Psoas muscle (tissue), 8 donors: ENCODE measurements at regions of chr1 and their contacts with region 1.

Region 1: GRCh38 chr1:2044510-2045319 is 5.5 kb upstream of the PRKCZ start:
- DNase-seq: peak; percentile 79 to 81
- ATAC-seq: peak; percentile 81 to 88 (median 82)
- H3K4me3 ChIP-seq: peak overlapping the region; percentile 45
- H3K27ac ChIP-seq: no peak overlapping the region
- H3K4me1 ChIP-seq: no peaks in the 10 kb centered on the region
- H3K27me3 ChIP-seq: peaks cover 0 to 53% (median 15%) of the 10 kb centered on the region in 3 donors
- CTCF ChIP-seq: peak; percentile 80

Region 2: GRCh38 chr1:1943834-1944570 is 100.7 kb before region 1 on chr1:
- intact Hi-C with region 1: loop called (anchors 1 to 5 kb)
- DNase-seq: peak; percentile 62 to 76
- ATAC-seq: peak; percentile 72 to 92 (median 86)
- H3K4me3 ChIP-seq: no peak overlapping the region
- H3K27ac ChIP-seq: no peak overlapping the region
- H3K4me1 ChIP-seq: no peaks in the 10 kb centered on the region
- H3K27me3 ChIP-seq: peaks cover 0 to 50% (median 0%) of the 10 kb centered on the region in 3 donors
- CTCF ChIP-seq: peak; percentile 80

Region 3: DNA sequence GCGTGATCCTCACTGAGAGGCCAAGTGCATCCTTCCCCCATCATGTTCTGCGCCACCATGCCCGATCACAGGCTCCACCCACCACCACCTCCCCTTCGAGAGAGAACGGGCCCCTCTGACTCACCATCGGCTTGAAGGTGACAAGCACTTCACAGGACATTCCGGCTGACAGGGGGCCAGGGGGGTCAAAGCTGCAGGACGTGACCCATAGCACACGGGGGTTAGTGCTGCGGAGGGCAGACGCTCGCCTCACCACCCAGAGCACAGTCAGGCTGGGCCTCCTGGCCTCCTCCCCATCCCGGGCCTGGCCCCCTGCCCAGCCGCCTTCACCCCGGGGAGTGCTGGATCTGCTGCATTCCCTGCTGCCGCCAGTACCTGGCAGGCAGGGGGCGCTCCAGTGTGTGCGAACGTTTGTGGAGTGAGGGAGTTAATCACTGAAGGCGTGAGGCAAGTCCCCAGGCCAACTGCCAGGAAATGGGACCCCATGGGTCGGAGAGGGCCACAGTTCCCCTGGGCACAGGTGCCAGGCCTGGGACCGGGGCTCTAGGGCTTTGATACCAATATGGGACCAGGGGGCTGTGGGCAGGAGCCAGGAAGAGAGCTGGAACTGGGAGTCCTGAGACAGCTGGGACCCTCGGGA is 84.8 kb before region 1 on chr1:
- intact Hi-C with region 1: loop called (anchors 2 to 5 kb)
- DNase-seq: peak; percentile 79 to 80
- ATAC-seq: peak; percentile 40 to 69 (median 62)
- H3K4me3 ChIP-seq: no peak overlapping the region
- H3K27ac ChIP-seq: no peak overlapping the region
- H3K4me1 ChIP-seq: no peaks in the 10 kb centered on the region
- H3K27me3 ChIP-seq: peaks cover 0 to 95% (median 15%) of the 10 kb centered on the region in 3 donors
- CTCF ChIP-seq: peak; percentile 58

Region 4: GRCh38 chr1:2180297-2181245 is 135.9 kb after region 1 on chr1:
- intact Hi-C with region 1: no loop called
- DNase-seq: no peak
- ATAC-seq: no peak
- H3K4me3 ChIP-seq: no peak overlapping the region
- H3K27ac ChIP-seq: no peak overlapping the region
- H3K4me1 ChIP-seq: no peaks in the 10 kb centered on the region
- H3K27me3 ChIP-seq: no peaks in the 10 kb centered on the region
- CTCF ChIP-seq: no peak